ENCODE measurements at regions of chr6 and their contacts with region 1.

Region 1: DNA sequence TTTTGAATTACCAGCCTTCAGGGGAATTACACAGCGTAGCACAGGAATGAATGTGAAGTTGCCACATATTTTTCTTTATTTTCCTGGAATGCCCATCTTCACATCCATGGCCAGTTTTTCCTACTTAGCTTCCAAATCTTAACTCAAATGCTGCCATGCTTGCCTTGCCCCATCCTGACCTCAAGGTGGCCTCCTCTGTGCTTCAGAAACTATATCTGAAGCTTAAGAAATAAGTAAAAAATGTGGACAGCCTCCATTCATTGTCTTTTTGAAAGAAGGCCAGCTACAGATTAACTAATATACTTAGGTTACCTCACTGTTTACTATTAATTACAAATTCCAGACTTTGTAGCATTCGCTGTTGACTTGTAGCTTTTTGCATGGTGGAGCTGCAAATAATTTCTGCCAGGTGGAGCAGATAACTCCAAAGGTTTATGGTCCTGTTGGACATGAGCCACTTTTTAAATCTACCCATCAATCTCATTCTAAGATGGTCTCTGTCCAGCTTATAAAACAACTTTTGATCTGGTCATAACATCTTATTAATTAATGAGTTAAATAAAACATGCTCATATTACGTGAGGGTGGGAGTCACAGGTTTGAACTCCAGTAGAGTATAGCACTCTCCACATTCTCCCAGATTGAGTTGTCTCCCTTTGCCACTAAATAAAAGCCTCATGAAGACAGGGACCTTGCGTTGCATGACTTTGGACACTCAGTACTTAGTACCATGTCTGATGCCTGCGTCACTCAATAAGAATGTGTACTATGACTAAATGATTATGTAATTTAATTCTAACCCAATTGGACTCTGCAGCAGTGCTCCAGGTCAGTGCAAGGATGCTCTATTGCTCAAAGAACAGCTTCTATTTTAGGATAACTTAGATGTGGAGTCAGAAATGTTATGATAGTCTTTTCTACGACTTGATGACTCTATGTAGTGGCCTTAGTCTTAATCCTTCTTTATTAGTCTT is 678.6 kb upstream of the CITED2 start:
- DNase-seq: no peak
- ATAC-seq: no peak
- H3K4me3 ChIP-seq: no peak overlapping the region
- H3K27ac ChIP-seq: no peak overlapping the region
- H3K4me1 ChIP-seq: no peaks in the 10 kb centered on the region
- H3K27me3 ChIP-seq: no peaks in the 10 kb centered on the region
- CTCF ChIP-seq: peak; percentile 27 to 40 (median 30); a peak in 4 of 6 replicates
- EP300 ChIP-seq: no peak
- POLR2A ChIP-seq: no peak
- RAD21 ChIP-seq: peak; percentile 69

Region 2: DNA sequence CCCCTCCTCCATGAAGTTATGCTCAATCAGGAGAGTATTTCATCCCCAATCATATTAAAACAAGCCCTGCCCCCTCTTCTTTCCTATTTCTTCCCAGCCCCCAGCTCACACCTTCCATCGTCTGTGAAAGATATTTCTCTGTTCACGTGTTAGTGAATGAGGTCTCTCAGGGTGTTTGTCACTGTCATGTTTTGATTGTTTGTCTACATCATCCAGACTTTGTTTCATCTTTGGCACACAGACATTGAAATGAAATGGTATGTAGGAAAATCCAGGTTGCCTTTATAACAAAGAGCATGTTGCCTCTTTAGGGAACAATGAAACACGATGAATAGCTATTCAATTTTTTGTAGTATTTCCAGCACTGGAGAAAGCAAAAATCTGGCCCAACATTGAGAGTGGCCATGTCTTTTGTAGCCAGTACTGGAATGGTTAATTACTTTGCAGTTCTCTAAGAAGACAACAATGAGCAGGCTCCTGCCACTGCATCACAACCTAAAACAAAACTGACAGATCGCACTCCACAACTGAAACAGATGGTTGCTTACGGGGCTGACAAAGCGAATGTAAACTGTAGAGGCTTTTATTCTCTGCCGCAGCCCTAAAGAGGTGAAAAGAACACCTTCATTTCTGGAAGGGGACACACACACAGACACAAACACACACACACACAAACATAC is 135.0 kb before region 1 on chr6:
- CTCF ChIA-PET with region 1: no interaction called
- POLR2A ChIA-PET with region 1: no interaction called
- RAD21 ChIA-PET with region 1: no interaction called
- SMC1A ChIA-PET with region 1: no interaction called
- in situ Hi-C with region 1: no loop called
- intact Hi-C with region 1: no loop called
- DNase-seq: no peak
- ATAC-seq: no peak
- H3K4me3 ChIP-seq: no peak overlapping the region
- H3K27ac ChIP-seq: no peak overlapping the region
- H3K4me1 ChIP-seq: peaks cover 3% of the 10 kb centered on the region; the same call in 1 of the 2 replicates
- H3K27me3 ChIP-seq: no peaks in the 10 kb centered on the region; a peak in 1 of 4 replicates
- CTCF ChIP-seq: no peak
- EP300 ChIP-seq: no peak
- POLR2A ChIP-seq: no peak
- RAD21 ChIP-seq: no peak

Region 3: DNA sequence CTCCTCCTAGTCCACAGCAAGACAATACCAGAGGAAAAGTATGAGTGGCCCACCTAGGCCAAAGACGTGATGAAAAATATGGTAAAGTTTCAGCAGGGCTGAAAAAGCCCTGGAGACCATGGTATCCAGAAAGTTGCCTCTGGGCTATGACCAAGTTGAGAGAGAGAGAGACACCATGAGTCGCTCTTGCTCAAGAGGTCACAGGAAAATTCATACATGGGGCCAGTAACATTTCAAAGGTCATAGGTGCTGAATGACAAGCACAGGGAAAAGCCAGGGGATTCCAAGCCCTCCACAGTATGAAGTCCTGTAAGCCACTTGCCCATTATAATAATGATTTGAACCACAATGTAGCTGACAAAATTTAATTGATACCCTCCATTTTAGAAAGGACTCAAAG is 20.9 kb before region 1 on chr6:
- CTCF ChIA-PET with region 1: interaction called, 5 read pairs
- POLR2A ChIA-PET with region 1: interaction called, 3 read pairs
- RAD21 ChIA-PET with region 1: interaction called, 3 read pairs
- SMC1A ChIA-PET with region 1: interaction called, 13 read pairs
- in situ Hi-C with region 1: no loop called
- intact Hi-C with region 1: no loop called
- DNase-seq: no peak
- ATAC-seq: no peak
- H3K4me3 ChIP-seq: no peak overlapping the region
- H3K27ac ChIP-seq: no peak overlapping the region
- H3K4me1 ChIP-seq: no peaks in the 10 kb centered on the region
- H3K27me3 ChIP-seq: no peaks in the 10 kb centered on the region; a peak in 1 of 4 replicates
- CTCF ChIP-seq: no peak
- EP300 ChIP-seq: no peak
- POLR2A ChIP-seq: no peak
- RAD21 ChIP-seq: no peak

Region 4: GRCh38 chr6:140064366-140064765 is 11.3 kb after region 1 on chr6:
- CTCF ChIA-PET with region 1: interaction called, 10 read pairs
- POLR2A ChIA-PET with region 1: interaction called, 3 read pairs
- RAD21 ChIA-PET with region 1: interaction called, 3 read pairs
- SMC1A ChIA-PET with region 1: interaction called, 7 read pairs
- in situ Hi-C with region 1: no loop called
- intact Hi-C with region 1: no loop called
- DNase-seq: no peak
- ATAC-seq: no peak
- H3K4me3 ChIP-seq: no peak overlapping the region
- H3K27ac ChIP-seq: no peak overlapping the region
- H3K4me1 ChIP-seq: no peaks in the 10 kb centered on the region
- H3K27me3 ChIP-seq: no peaks in the 10 kb centered on the region
- CTCF ChIP-seq: no peak
- EP300 ChIP-seq: no peak
- POLR2A ChIP-seq: no peak
- RAD21 ChIP-seq: no peak

Region 5: DNA sequence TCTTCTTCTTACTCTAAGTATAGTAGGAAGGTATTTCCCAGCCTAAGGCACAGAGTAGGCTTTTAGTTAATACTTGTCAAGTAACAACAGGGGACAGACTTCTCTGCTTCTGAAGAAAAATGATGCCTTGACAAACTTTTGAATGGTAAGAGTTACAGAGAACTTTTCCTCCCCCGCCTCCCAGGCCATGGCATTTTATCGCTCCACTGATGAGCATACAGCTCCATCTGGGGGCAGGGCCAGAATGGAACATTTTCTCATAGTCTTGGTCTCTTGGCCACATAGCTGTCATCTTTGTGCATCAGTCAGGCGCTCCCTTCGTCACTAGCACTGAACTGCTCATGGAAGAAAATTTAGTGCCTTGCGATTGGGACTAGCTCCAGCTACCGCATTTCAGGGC is 388.2 kb after region 1 on chr6:
- CTCF ChIA-PET with region 1: interaction called, 12 read pairs
- POLR2A ChIA-PET with region 1: no interaction called
- RAD21 ChIA-PET with region 1: interaction called, 5 read pairs
- SMC1A ChIA-PET with region 1: interaction called, 15 read pairs
- in situ Hi-C with region 1: no loop called
- intact Hi-C with region 1: no loop called
- DNase-seq: no peak
- ATAC-seq: peak; percentile 52; the same call in 2 of the 3 replicates
- H3K4me3 ChIP-seq: no peak overlapping the region
- H3K27ac ChIP-seq: no peak overlapping the region
- H3K4me1 ChIP-seq: no peaks in the 10 kb centered on the region
- H3K27me3 ChIP-seq: no peaks in the 10 kb centered on the region
- CTCF ChIP-seq: peak in 2 of 3 experiments; percentile 15 to 36; a peak in 2 of 6 replicates
- EP300 ChIP-seq: no peak
- POLR2A ChIP-seq: no peak
- RAD21 ChIP-seq: peak; percentile 76

Region 6: GRCh38 chr6:140921366-140922226 is 868.6 kb after region 1 on chr6:
- CTCF ChIA-PET with region 1: interaction called, 10 read pairs
- POLR2A ChIA-PET with region 1: no interaction called
- RAD21 ChIA-PET with region 1: interaction called, 10 read pairs
- SMC1A ChIA-PET with region 1: interaction called, 10 read pairs
- in situ Hi-C with region 1: no loop called
- intact Hi-C with region 1: no loop called
- DNase-seq: no peak
- ATAC-seq: peak; percentile 87
- H3K4me3 ChIP-seq: no peak overlapping the region
- H3K27ac ChIP-seq: no peak overlapping the region
- H3K4me1 ChIP-seq: no peaks in the 10 kb centered on the region
- H3K27me3 ChIP-seq: no peaks in the 10 kb centered on the region
- CTCF ChIP-seq: peak; percentile 57 to 77 (median 60); a peak in 5 of 6 replicates
- EP300 ChIP-seq: no peak
- POLR2A ChIP-seq: no peak
- RAD21 ChIP-seq: peak; percentile 92

Measured in GM12878 (cell line).